Gastrocnemius medialis (tissue), 4 donors: ENCODE measurements at regions of chr9 and their contacts with region 1.

Region 1: GRCh38 chr9:120868676-120869359 is 8.2 kb downstream of the PHF19 start:
- DNase-seq: peak; percentile 92 to 98
- ATAC-seq: peak; percentile 86 to 87
- H3K4me3 ChIP-seq: peak overlapping the region; percentile 69 to 79 (median 72)
- H3K27ac ChIP-seq: peak overlapping the region; percentile 84 to 86 (median 84)
- H3K4me1 ChIP-seq: peaks cover 4 to 8% of the 10 kb centered on the region in 2 donors
- H3K27me3 ChIP-seq: no peaks in the 10 kb centered on the region
- CTCF ChIP-seq: peak in 4 of 5 experiments; percentile 31 to 61 (median 50)
- POLR2A ChIP-seq: peak; percentile 20 to 29

Region 2: GRCh38 chr9:120714088-120714845 is 154.6 kb before region 1 on chr9 and contains the start of gene MEGF9:
- in situ Hi-C with region 1: no loop called
- intact Hi-C with region 1: loop called (anchors 2 kb)
- DNase-seq: peak; percentile 98
- ATAC-seq: peak; percentile 92 to 93
- H3K4me3 ChIP-seq: peak within 1 kb of the TSS; percentile 74 to 90 (median 82)
- H3K27ac ChIP-seq: peak within 1 kb of the TSS; percentile 72 to 76 (median 74)
- H3K4me1 ChIP-seq: peaks cover 31 to 43% of the 10 kb centered on the region in 2 donors
- H3K27me3 ChIP-seq: no peaks in the 10 kb centered on the region
- CTCF ChIP-seq: peak in 2 of 5 experiments; percentile 16 to 17
- POLR2A ChIP-seq: peak; percentile 79 to 92
- total RNA-seq, gene MEGF9: 6.3 to 15.3 (median 13.5) TPM

Region 3: GRCh38 chr9:120792898-120793765 is 75.7 kb before region 1 on chr9 and contains the start of gene FBXW2:
- in situ Hi-C with region 1: no loop called
- intact Hi-C with region 1: loop called (anchors 1 kb)
- DNase-seq: peak; percentile 85 to 88
- ATAC-seq: peak; percentile 97 to 99
- H3K4me3 ChIP-seq: peak within 1 kb of the TSS; percentile 85 to 98 (median 94)
- H3K27ac ChIP-seq: peak within 1 kb of the TSS; percentile 84 to 95 (median 92)
- H3K4me1 ChIP-seq: peaks cover 33% of the 10 kb centered on the region in 2 donors
- H3K27me3 ChIP-seq: no peaks in the 10 kb centered on the region
- CTCF ChIP-seq: peak in 2 of 5 experiments; percentile 18
- POLR2A ChIP-seq: peak; percentile 79 to 85
- total RNA-seq, gene FBXW2: 17.0 to 20.0 (median 19.0) TPM

Region 4: GRCh38 chr9:120842690-120843499 is 25.9 kb before region 1 on chr9 and contains the start of gene PSMD5:
- in situ Hi-C with region 1: no loop called
- intact Hi-C with region 1: loop called (anchors 1 kb)
- DNase-seq: peak; percentile 97 to 99
- ATAC-seq: peak; percentile 98 to 99
- H3K4me3 ChIP-seq: peak within 1 kb of the TSS; percentile 79 to 91 (median 81)
- H3K27ac ChIP-seq: peak within 1 kb of the TSS; percentile 90 to 96 (median 91)
- H3K4me1 ChIP-seq: peaks cover 16 to 21% of the 10 kb centered on the region in 2 donors
- H3K27me3 ChIP-seq: no peaks in the 10 kb centered on the region
- CTCF ChIP-seq: no peak
- POLR2A ChIP-seq: peak; percentile 69 to 80
- total RNA-seq, gene PSMD5: 9.3 to 35.3 (median 12.6) TPM

Region 5: GRCh38 chr9:120928483-120929228 is 59.8 kb after region 1 on chr9:
- in situ Hi-C with region 1: loop called in 3 of 4 experiments (anchors 10 kb)
- intact Hi-C with region 1: loop called (anchors 2 kb)
- DNase-seq: peak; percentile 57 to 69
- ATAC-seq: peak; percentile 90 to 91
- H3K4me3 ChIP-seq: peak overlapping the region; percentile 67 to 96 (median 76)
- H3K27ac ChIP-seq: peak overlapping the region; percentile 75 to 93 (median 88)
- H3K4me1 ChIP-seq: peaks cover 10 to 11% of the 10 kb centered on the region in 2 donors
- H3K27me3 ChIP-seq: no peaks in the 10 kb centered on the region
- CTCF ChIP-seq: peak in 3 of 5 experiments; percentile 20 to 44 (median 23)
- POLR2A ChIP-seq: peak; percentile 22 to 58

Region 6: DNA sequence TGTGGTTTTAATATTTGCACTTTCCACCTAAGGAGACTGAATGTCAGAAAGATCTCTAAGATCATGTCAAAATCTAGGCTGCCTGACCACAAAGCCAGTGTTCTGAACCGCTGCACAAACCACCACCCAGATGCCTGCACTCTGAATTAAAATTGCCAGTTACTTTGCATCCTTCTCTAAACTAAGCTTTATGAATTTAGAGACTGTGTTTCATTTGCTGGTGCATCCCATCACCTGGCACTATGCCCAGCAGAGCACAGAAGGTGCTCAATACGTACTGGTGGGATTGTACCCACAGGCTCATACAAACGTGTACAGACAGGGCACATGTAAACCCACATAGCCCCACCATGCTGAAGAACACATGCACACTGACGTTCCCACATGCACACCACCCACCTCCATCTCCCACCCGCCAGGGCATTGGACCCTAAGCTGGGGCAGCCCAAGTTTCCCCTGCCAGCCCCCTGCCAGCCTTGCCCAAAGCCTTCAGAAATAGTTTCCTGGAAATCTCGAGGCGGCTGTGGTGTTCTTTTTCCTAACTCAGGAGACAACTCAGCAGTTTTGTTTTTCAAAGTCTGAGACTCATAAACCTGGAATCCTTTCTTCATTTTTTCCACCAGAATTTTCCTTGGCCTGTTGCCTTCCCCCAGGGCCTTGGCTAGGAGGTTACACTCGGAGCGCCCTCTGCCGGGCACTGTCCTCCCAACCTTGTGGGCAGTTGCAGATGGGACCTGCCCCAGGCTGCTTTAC is 67.4 kb after region 1 on chr9:
- in situ Hi-C with region 1: loop called (anchors 5 to 10 kb)
- intact Hi-C with region 1: loop called (anchors 1 kb)
- DNase-seq: peak; percentile 76 to 80
- ATAC-seq: peak; percentile 80 to 83
- H3K4me3 ChIP-seq: no peak overlapping the region
- H3K27ac ChIP-seq: peak overlapping the region; percentile 53 to 72 (median 60)
- H3K4me1 ChIP-seq: peaks cover 22 to 23% of the 10 kb centered on the region in 2 donors
- H3K27me3 ChIP-seq: no peaks in the 10 kb centered on the region
- CTCF ChIP-seq: peak; percentile 78 to 88 (median 79)
- POLR2A ChIP-seq: no peak

Region 7: GRCh38 chr9:121074635-121075385 is 206.0 kb after region 1 on chr9 and contains the start of gene CNTRL:
- in situ Hi-C with region 1: loop called in 1 of 4 experiments (anchors 25 kb)
- intact Hi-C with region 1: no loop called
- DNase-seq: peak; percentile 64 to 73
- ATAC-seq: peak; percentile 80 to 85
- H3K4me3 ChIP-seq: peak within 1 kb of the TSS; percentile 68 to 81 (median 70)
- H3K27ac ChIP-seq: peak within 1 kb of the TSS; percentile 66 to 77 (median 74)
- H3K4me1 ChIP-seq: peaks cover 0 to 10% of the 10 kb centered on the region in 2 donors
- H3K27me3 ChIP-seq: peaks cover 10 to 20% (median 16%) of the 10 kb centered on the region in 3 donors
- CTCF ChIP-seq: no peak
- POLR2A ChIP-seq: peak; percentile 9 to 53
- total RNA-seq, gene CNTRL: 1.0 to 3.2 (median 1.6) TPM